Activated CD8-positive, alpha-beta T cell treated with anti-CD3 and anti-CD28 coated beads for 36 hours (primary cell): ENCODE measurements at regions of chr6 and their contacts with region 1.

Region 1: GRCh38 chr6:136792410-136793262 is at the start of gene MAP3K5:
- DNase-seq: peak; percentile 96
- ATAC-seq: peak; percentile 79
- H3K4me3 Mint-ChIP-seq: peak within 1 kb of the TSS; percentile 83
- H3K27ac Mint-ChIP-seq: peak within 1 kb of the TSS; percentile 96
- H3K4me1 Mint-ChIP-seq: peaks cover 34% of the 10 kb centered on the region
- H3K27me3 Mint-ChIP-seq: no peaks in the 10 kb centered on the region
- CTCF ChIP-seq: peak; percentile 69
- total RNA-seq, gene MAP3K5: 4.4 to 4.6 TPM

Region 2: DNA sequence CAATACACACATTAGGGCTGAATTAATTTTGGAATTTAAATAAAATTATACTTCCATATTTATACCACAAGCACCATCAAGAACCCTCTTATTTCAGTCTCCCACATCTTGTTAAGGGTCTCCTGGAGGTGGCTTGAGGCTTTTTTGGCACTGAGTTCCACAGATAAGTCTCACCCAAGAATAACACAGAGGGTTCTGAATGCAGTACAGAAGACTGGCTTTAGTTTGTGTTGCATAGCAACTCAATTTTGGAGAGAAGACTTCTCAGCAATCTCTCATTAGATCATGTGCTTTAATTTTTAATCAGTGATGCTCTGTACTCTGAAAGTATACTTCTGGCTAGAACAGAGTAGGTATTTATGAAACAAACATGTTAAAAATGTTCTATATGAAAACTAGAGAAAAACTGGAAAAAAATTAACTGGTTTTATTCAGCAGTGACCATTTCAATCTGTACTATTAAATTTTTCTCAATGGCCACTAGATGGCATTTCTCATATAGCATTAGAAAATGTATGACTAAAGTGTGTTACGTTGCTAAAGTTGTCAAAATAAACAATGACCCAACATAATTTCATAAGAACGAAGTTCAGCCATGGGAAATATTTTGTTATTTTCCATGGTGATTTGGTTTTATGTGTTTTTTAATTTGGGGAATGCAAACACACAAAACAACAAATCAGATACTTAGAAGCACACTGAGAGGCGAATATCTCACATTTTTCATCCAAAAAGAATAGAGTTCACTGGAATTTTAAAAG is 209.7 kb before region 1 on chr6:
- CTCF ChIA-PET with region 1: interaction called, 12 read pairs
- POLR2A ChIA-PET with region 1: no interaction called
- intact Hi-C with region 1: no loop called
- DNase-seq: no peak
- ATAC-seq: no peak
- H3K4me3 Mint-ChIP-seq: no peak overlapping the region
- H3K27ac Mint-ChIP-seq: no peak overlapping the region
- H3K4me1 Mint-ChIP-seq: no peaks in the 10 kb centered on the region
- H3K27me3 Mint-ChIP-seq: no peaks in the 10 kb centered on the region
- CTCF ChIP-seq: peak; percentile 76

Region 3: GRCh38 chr6:136613477-136613876 is 179.2 kb before region 1 on chr6:
- CTCF ChIA-PET with region 1: interaction called, 30 read pairs
- POLR2A ChIA-PET with region 1: no interaction called
- intact Hi-C with region 1: no loop called
- DNase-seq: no peak
- ATAC-seq: no peak
- H3K4me3 Mint-ChIP-seq: no peak overlapping the region
- H3K27ac Mint-ChIP-seq: no peak overlapping the region
- H3K4me1 Mint-ChIP-seq: peaks cover 6% of the 10 kb centered on the region
- H3K27me3 Mint-ChIP-seq: no peaks in the 10 kb centered on the region
- CTCF ChIP-seq: no peak

Region 4: GRCh38 chr6:136706420-136706819 is 86.2 kb before region 1 on chr6:
- CTCF ChIA-PET with region 1: interaction called, 14 read pairs
- POLR2A ChIA-PET with region 1: interaction called, 6 read pairs
- intact Hi-C with region 1: no loop called
- DNase-seq: no peak
- ATAC-seq: no peak
- H3K4me3 Mint-ChIP-seq: no peak overlapping the region
- H3K27ac Mint-ChIP-seq: no peak overlapping the region
- H3K4me1 Mint-ChIP-seq: peaks cover 2% of the 10 kb centered on the region
- H3K27me3 Mint-ChIP-seq: no peaks in the 10 kb centered on the region
- CTCF ChIP-seq: no peak

Region 5: DNA sequence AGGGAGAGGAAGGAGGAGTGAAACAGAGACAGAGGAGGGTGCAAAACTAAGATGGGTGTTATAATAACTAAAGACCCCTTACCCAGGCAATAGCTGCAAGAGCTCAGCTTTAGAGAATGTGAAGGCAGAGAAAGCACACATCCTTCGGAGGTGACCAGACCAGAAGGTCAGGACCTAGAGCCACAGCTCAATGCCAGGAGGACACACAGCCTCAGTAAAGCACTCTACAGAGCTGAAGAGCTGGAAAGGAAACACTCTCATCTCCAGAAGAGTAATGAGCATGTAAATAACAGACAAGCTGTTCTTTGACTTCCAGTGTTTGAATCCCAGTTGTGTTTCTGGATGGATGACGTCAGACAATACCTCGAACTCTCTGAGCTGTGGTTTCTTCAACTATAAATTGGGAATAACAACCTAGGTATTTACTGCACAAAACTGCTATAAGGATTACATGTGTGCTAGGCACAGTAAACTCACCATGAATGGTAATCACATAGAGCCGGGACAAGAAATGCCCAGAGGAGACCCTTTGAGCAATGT is 63.6 kb before region 1 on chr6:
- CTCF ChIA-PET with region 1: interaction called, 10 read pairs
- POLR2A ChIA-PET with region 1: interaction called, 4 read pairs
- intact Hi-C with region 1: loop called (anchors 10 kb)
- DNase-seq: no peak
- ATAC-seq: no peak
- H3K4me3 Mint-ChIP-seq: no peak overlapping the region
- H3K27ac Mint-ChIP-seq: no peak overlapping the region
- H3K4me1 Mint-ChIP-seq: peaks cover 16% of the 10 kb centered on the region
- H3K27me3 Mint-ChIP-seq: no peaks in the 10 kb centered on the region
- CTCF ChIP-seq: no peak

Region 6: DNA sequence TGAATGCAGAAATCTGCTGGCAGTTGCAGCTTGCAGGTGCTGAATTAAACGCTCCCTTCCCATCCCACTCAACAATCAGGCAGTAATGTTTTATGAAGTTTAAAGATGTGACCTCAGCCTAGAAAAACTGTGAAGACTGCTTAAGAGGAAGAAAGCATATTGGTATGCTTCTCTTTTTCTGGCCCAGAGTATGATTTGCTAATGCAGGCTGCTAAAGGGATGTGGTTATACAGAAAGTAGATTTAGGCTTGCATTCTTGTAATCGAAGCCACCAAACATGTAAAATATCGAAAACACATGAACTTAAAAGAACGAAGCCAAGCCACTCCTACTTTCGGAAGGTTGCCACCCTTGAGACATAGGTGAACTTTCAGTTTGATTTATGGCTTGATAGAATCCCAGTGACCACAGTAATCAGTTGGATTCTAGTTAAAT is 41.1 kb before region 1 on chr6:
- CTCF ChIA-PET with region 1: interaction called, 17 read pairs
- POLR2A ChIA-PET with region 1: interaction called, 12 read pairs
- intact Hi-C with region 1: loop called (anchors 5 kb)
- DNase-seq: peak; percentile 66
- ATAC-seq: peak; percentile 79
- H3K4me3 Mint-ChIP-seq: peak overlapping the region; percentile 18
- H3K27ac Mint-ChIP-seq: peak overlapping the region; percentile 62
- H3K4me1 Mint-ChIP-seq: peaks cover 58% of the 10 kb centered on the region
- H3K27me3 Mint-ChIP-seq: no peaks in the 10 kb centered on the region
- CTCF ChIP-seq: no peak

Region 7: GRCh38 chr6:136772685-136773472 is 19.8 kb before region 1 on chr6:
- CTCF ChIA-PET with region 1: interaction called, 22 read pairs
- POLR2A ChIA-PET with region 1: interaction called, 8 read pairs
- intact Hi-C with region 1: no loop called
- DNase-seq: no peak
- ATAC-seq: peak; percentile 55
- H3K4me3 Mint-ChIP-seq: no peak overlapping the region
- H3K27ac Mint-ChIP-seq: peak overlapping the region; percentile 4
- H3K4me1 Mint-ChIP-seq: peaks cover 34% of the 10 kb centered on the region
- H3K27me3 Mint-ChIP-seq: no peaks in the 10 kb centered on the region
- CTCF ChIP-seq: no peak

Region 8: GRCh38 chr6:136914947-136915346 is 122.3 kb after region 1 on chr6:
- CTCF ChIA-PET with region 1: no interaction called
- POLR2A ChIA-PET with region 1: no interaction called
- intact Hi-C with region 1: no loop called
- DNase-seq: no peak
- ATAC-seq: no peak
- H3K4me3 Mint-ChIP-seq: no peak overlapping the region
- H3K27ac Mint-ChIP-seq: no peak overlapping the region
- H3K4me1 Mint-ChIP-seq: no peaks in the 10 kb centered on the region
- H3K27me3 Mint-ChIP-seq: peaks cover 9% of the 10 kb centered on the region
- CTCF ChIP-seq: no peak